ENCODE measurements at regions of chr13 and their contacts with region 1.

Region 1: GRCh38 chr13:27203854-27204253 is 32.2 kb upstream of the USP12 start:
- DNase-seq: no peak
- H3K4me3 Mint-ChIP-seq: no peak overlapping the region
- H3K27ac Mint-ChIP-seq: no peak overlapping the region
- H3K4me1 Mint-ChIP-seq: peaks cover 8% of the 10 kb centered on the region
- H3K27me3 Mint-ChIP-seq: no peaks in the 10 kb centered on the region

Region 2: GRCh38 chr13:26688286-26688685 is 515.6 kb before region 1 on chr13:
- CTCF ChIA-PET with region 1: no interaction called
- POLR2A ChIA-PET with region 1: no interaction called
- intact Hi-C with region 1: no loop called
- DNase-seq: no peak
- H3K4me3 Mint-ChIP-seq: no peak overlapping the region
- H3K27ac Mint-ChIP-seq: no peak overlapping the region
- H3K4me1 Mint-ChIP-seq: no peaks in the 10 kb centered on the region
- H3K27me3 Mint-ChIP-seq: peaks cover 11% of the 10 kb centered on the region

Region 3: DNA sequence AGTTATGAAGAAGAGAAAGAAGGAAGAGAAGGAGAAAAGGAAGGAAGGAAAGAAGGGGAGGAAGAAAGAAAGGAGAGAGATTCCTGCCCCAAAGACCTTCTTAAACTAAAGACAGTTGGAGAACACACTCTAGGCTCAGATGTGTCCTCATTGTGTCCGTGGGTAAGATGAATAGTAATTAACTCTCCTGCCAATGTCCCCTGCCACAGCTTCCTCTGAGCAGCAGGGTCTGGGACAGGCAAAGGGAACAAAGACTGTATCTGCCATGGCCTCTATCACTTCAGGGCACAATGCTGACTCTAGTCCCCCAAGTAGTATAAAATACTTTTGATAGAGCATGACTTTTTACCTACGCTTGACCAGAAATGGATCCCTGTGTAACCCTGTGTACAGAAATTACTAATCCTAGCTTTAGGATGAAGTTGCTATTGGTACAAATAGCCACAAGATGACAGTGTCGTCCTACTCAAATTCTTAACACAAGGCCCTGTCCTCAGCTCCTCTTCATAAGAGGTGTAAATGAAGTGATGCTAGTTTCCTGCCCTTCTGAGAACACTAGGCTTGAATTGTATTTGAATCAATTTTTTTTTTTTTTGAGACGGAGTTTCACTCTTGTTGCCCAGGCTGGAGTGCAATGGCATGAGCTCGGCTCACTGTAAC is 257.0 kb before region 1 on chr13:
- CTCF ChIA-PET with region 1: no interaction called
- POLR2A ChIA-PET with region 1: no interaction called
- intact Hi-C with region 1: no loop called
- DNase-seq: no peak
- H3K4me3 Mint-ChIP-seq: no peak overlapping the region
- H3K27ac Mint-ChIP-seq: no peak overlapping the region
- H3K4me1 Mint-ChIP-seq: no peaks in the 10 kb centered on the region
- H3K27me3 Mint-ChIP-seq: peaks cover 8% of the 10 kb centered on the region

Region 4: GRCh38 chr13:26996965-26997752 is 206.7 kb before region 1 on chr13:
- CTCF ChIA-PET with region 1: no interaction called
- POLR2A ChIA-PET with region 1: no interaction called
- intact Hi-C with region 1: loop called (anchors 5 kb)
- DNase-seq: peak; percentile 48
- H3K4me3 Mint-ChIP-seq: no peak overlapping the region
- H3K27ac Mint-ChIP-seq: peak overlapping the region; percentile 14
- H3K4me1 Mint-ChIP-seq: peaks cover 8% of the 10 kb centered on the region
- H3K27me3 Mint-ChIP-seq: peaks cover 31% of the 10 kb centered on the region

Region 5: GRCh38 chr13:27137759-27138158 is 66.1 kb before region 1 on chr13:
- CTCF ChIA-PET with region 1: no interaction called
- POLR2A ChIA-PET with region 1: no interaction called
- intact Hi-C with region 1: no loop called
- DNase-seq: no peak
- H3K4me3 Mint-ChIP-seq: no peak overlapping the region
- H3K27ac Mint-ChIP-seq: no peak overlapping the region
- H3K4me1 Mint-ChIP-seq: peaks cover 63% of the 10 kb centered on the region
- H3K27me3 Mint-ChIP-seq: no peaks in the 10 kb centered on the region

Region 6: GRCh38 chr13:27980280-27980998 is 776.6 kb after region 1 on chr13:
- CTCF ChIA-PET with region 1: no interaction called
- POLR2A ChIA-PET with region 1: no interaction called
- intact Hi-C with region 1: no loop called
- DNase-seq: no peak
- H3K4me3 Mint-ChIP-seq: no peak overlapping the region
- H3K27ac Mint-ChIP-seq: no peak overlapping the region
- H3K4me1 Mint-ChIP-seq: peaks cover 23% of the 10 kb centered on the region
- H3K27me3 Mint-ChIP-seq: peaks cover 69% of the 10 kb centered on the region